OCI-LY7 (cell line): ENCODE measurements at regions of chr11 and their contacts with region 1.

Region 1: DNA sequence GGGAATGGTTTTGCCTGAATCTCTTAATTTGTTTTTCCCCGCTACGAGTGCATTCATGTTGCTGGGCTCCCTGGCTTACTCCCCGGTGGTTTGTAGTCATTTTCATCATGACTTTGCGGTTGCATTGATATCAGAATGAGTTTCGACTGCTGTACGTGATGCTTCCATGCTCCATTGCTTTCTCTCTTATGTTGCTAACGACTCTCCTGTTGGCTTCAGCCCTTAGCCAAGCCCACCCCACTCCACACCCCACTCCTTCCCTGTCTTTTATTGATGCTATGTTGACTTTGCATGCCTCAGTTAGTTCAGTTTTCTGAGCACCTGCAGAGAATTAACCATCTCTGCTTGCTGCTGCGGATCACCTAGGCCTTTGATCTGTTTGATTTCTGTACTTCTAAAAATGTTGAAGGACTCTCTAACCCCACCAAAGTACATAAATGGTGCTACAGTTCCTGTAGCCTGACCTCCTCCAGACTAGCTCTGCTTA is 65.3 kb downstream of the ARFGAP2 start:
- DNase-seq: peak; percentile 98
- H3K4me3 ChIP-seq: peak overlapping the region; percentile 62
- H3K27ac ChIP-seq: peak overlapping the region; percentile 99
- H3K4me1 ChIP-seq: peaks cover 71% of the 10 kb centered on the region
- CTCF ChIP-seq: peak; percentile 38; the same call in 1 of the 2 replicates

Region 2: GRCh38 chr11:46936138-46937110 is 174.9 kb before region 1 on chr11 and contains the start of gene CSTPP1:
- CTCF ChIA-PET with region 1: no interaction called
- POLR2A ChIA-PET with region 1: interaction called, 3 read pairs
- intact Hi-C with region 1: loop called (anchors 5 kb)
- DNase-seq: peak; percentile 96
- H3K4me3 ChIP-seq: peak within 1 kb of the TSS; percentile 82
- H3K27ac ChIP-seq: peak within 1 kb of the TSS; percentile 36
- H3K4me1 ChIP-seq: peaks cover 16% of the 10 kb centered on the region
- CTCF ChIP-seq: no peak
- total RNA-seq, gene CSTPP1: 35.2 and 39.6 TPM in 2 replicates

Region 3: DNA sequence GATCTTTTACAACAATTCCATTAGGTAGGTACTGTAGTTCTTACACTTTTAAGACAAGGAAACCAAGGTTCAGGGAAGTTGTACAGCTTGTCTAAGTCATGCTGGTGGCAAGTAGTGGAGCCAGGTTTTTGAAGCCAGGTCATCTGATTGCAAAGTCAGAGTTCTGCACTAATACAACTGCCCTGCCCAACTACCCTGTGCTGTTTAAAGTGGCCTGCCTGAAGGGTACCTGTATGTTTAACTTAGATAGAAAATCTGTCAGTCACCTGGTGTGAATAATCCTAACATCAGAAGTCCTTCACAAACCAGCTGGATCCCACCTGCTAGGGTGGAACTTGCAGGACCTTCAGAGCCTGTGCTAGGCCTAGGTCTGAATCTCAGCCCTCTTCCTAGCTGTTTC is 21.1 kb after region 1 on chr11:
- CTCF ChIA-PET with region 1: interaction called, 3 read pairs
- POLR2A ChIA-PET with region 1: interaction called, 10 read pairs
- intact Hi-C with region 1: no loop called
- DNase-seq: no peak
- H3K4me3 ChIP-seq: no peak overlapping the region
- H3K27ac ChIP-seq: no peak overlapping the region
- H3K4me1 ChIP-seq: peaks cover 61% of the 10 kb centered on the region
- CTCF ChIP-seq: no peak

Region 4: DNA sequence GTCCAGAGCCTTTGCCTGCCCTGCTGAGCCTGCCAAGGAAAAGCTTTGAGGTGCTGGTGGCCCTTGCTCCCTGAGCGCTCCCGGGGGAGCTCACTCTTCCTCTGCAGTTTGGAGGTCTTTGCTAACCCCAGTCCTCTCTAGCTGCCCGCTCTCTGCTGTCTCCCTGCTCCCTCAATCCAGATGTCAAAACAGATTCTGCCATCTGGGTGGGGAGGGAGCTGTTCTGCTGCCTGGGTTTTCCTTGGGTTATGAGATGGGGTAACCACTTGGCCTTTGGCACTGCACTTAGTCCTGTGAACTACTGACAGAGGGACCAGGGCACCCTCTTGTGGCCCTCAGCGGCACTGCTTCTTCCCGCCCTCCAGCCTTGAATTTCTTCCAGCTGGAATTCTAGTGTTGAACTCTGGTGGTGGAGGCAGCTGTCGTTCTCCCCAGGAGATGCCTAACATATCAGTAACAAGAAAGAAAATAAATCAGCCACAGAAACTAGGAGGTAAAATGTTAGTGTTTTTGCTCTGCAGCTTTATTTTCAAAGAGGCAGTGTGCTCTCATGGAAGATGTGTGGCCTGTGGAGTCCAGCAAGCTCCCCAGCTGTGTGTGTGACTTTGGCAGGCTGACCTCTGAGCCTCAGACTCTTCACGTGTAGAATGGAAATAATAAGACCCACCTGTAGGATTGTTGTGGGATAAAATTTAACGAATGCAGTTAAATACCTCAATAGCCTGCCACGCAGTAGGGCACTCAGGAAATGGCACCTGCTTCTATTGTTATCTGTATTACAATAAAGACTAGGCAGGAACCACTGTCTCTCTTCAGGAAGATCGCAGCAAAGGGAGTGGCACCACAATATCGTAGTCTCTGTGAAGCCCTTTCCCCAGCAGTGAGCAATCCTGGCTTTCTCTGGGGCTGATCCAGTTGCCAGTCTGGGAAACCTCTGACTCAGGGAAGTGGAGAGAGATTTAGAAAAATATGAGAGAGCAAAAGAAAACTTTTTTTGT is 41.9 kb after region 1 on chr11:
- CTCF ChIA-PET with region 1: interaction called, 10 read pairs
- POLR2A ChIA-PET with region 1: interaction called, 48 read pairs
- intact Hi-C with region 1: loop called (anchors 1 kb)
- DNase-seq: peak; percentile 94
- H3K4me3 ChIP-seq: peak overlapping the region; percentile 53
- H3K27ac ChIP-seq: peak overlapping the region; percentile 95
- H3K4me1 ChIP-seq: peaks cover 93% of the 10 kb centered on the region
- CTCF ChIP-seq: peak; percentile 100

Region 5: GRCh38 chr11:47317064-47317828 is 205.9 kb after region 1 on chr11:
- CTCF ChIA-PET with region 1: no interaction called
- POLR2A ChIA-PET with region 1: no interaction called
- intact Hi-C with region 1: no loop called
- DNase-seq: no peak
- H3K4me3 ChIP-seq: no peak overlapping the region
- H3K27ac ChIP-seq: no peak overlapping the region
- H3K4me1 ChIP-seq: no peaks in the 10 kb centered on the region
- CTCF ChIP-seq: no peak

Region 6: DNA sequence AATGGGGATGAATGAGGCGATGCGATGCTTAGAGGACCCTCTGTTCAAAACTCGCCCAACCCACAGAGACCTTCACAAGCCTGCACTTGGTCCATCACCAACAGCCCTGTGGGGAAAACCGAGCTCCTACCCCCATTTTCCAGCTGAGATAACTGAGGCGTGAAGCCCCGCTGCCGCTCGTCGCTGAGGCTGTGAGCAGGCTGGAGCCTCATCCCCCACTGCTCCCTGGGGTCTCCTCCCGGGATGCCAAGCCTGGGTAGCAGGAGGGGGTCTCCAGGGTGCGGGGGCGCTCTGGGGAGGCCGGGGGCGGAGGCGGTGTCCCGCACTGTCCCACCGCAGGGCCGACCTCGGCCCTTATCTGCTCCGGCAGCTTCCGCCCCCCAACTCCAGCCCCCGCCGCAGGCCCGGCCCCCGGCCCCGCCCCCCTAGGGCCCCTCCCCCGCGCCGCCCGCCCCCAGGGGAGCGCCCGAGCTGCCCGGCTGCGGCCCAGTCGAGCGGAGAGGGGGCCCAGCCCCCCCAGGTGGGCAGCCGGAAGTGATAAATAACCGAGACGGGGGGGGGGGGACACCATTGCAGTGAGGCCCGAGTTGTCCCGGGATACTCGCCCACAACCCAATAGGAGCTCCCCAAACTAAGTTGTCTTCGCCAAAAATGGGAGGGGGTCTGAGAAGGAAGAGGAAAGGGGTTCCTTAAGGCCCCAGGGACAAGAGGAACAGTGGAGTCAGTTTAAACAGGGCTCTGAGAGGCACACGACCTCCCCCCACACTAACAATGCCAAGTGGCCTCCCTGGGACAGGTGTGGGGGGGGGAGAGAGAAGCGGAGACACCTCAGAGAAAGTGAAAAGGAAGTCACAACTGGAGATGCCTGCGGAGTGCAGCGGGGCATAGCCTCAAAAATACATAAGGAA is 288.8 kb after region 1 on chr11:
- CTCF ChIA-PET with region 1: no interaction called
- POLR2A ChIA-PET with region 1: no interaction called
- intact Hi-C with region 1: loop called (anchors 5 kb)
- DNase-seq: peak; percentile 92
- H3K4me3 ChIP-seq: peak overlapping the region; percentile 78
- H3K27ac ChIP-seq: peak overlapping the region; percentile 96
- H3K4me1 ChIP-seq: peaks cover 81% of the 10 kb centered on the region
- CTCF ChIP-seq: no peak

Region 7: GRCh38 chr11:47656260-47656885 is 545.0 kb after region 1 on chr11:
- CTCF ChIA-PET with region 1: no interaction called
- POLR2A ChIA-PET with region 1: no interaction called
- intact Hi-C with region 1: no loop called
- DNase-seq: no peak
- H3K4me3 ChIP-seq: no peak overlapping the region
- H3K27ac ChIP-seq: no peak overlapping the region
- H3K4me1 ChIP-seq: no peaks in the 10 kb centered on the region
- CTCF ChIP-seq: no peak